MCF 10A (cell line): ENCODE measurements at regions of chr9 and their contacts with region 1.

Region 1: DNA sequence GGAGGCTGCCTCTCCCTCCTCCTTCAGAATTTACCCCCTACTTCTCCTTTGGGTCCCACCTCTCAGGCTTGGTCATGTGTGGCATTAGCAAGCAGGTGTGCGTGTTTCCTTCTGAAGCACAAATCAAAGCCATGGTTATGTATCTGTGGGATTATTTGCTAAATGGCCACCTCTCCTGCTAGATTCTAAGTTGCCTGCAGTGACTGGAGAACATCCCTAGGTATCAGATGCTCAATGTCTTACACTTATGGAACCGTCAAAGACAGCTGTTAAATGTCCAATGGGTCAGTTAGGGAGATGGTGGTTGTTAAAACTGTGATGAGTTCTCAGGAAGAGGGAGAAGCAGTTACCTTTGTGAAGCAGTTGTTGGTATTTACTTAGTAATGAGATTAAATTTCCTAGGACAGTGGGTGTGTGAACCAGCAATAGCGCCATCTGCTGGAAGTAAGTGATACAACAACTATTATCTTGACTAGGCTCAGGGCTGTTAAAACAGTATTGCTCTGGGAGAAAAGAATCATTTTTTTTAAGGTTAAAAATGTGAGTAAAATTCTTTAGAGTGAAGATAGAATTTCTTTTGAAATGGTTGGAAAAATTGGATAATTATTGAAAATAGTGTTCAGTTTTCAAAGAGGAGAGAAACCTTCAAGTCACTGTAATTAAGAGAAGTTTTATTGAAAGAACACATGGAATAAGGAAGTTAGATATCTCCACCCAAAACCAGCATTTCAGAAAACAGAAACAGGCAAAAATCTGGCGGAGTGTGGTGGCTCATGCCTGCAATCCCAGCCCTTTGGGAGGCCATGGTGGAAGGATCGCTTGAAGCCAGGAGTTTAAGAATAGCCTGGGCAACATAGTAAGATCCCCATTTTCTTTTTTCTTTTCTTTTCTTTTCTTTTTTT is 71.3 kb downstream of the TMC1 start:
- DNase-seq: peak; percentile 66
- H3K4me3 Mint-ChIP-seq: no peak overlapping the region
- H3K27ac Mint-ChIP-seq: no peak overlapping the region
- H3K4me1 Mint-ChIP-seq: peaks cover 15% of the 10 kb centered on the region
- H3K27me3 Mint-ChIP-seq: no peaks in the 10 kb centered on the region
- CTCF ChIP-seq: peak; percentile 64

Region 2: DNA sequence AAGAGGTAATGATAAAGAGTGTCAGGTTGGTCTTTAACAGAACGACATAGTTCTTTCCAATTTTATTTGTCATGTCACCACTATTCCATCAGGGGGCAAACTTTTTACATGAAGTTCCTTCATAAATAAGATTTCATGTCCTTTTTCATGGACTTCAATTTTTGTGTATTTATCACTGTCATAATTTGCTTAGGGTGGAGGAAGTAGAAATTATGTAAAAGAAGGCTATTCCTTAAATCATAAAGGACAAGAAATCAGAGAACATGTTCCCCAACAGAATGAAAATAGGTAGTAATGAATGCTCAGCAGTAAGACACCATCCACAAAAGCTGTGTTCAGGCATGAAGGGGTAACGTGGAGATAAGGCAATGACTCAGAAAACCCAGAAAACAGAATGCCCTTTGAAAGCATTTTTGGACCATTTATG is 300.5 kb before region 1 on chr9:
- CTCF ChIA-PET with region 1: interaction called, 16 read pairs
- POLR2A ChIA-PET with region 1: no interaction called
- intact Hi-C with region 1: loop called (anchors 1 kb)
- DNase-seq: peak; percentile 48
- H3K4me3 Mint-ChIP-seq: no peak overlapping the region
- H3K27ac Mint-ChIP-seq: peak overlapping the region; percentile 75
- H3K4me1 Mint-ChIP-seq: peaks cover 22% of the 10 kb centered on the region
- H3K27me3 Mint-ChIP-seq: no peaks in the 10 kb centered on the region
- CTCF ChIP-seq: peak; percentile 58

Region 3: DNA sequence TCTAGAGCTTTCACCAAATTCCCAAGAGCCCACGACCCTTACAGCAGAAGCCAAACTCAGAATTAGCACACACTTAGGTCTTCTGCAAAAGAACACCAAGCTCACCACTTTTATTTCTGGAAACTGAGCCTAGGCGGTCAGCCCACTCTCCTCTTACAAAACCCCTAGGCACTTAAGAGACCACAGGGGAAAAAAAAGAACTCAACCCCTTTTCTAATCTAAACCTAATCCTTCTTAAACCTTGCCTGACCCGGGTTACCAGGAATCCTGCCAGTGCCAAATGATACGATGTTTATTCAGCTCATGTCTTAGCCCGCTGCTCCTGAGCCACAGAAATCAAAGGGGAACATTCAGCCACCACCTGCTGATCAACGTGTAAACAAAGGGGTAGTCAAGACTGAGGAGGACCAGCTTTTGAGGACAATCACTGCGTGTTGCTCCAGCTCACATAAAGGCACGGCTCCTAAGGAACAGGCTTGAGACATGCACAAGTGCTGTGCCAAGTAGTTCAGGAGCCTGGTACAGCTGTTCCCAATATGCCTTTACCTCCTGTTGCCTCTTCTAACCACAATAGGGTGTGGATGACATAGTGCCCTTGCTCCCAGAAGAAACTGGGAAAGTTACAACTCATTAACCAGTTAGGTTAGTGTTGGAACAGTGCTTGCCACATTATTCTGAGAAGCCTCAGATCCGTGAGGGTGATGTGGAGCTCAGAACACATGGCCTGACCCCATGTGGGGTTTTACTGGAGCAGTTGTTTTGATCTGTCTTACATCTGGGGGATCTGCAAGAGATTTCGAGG is 277.0 kb before region 1 on chr9:
- CTCF ChIA-PET with region 1: interaction called, 12 read pairs
- POLR2A ChIA-PET with region 1: no interaction called
- intact Hi-C with region 1: no loop called
- DNase-seq: peak; percentile 64
- H3K4me3 Mint-ChIP-seq: no peak overlapping the region
- H3K27ac Mint-ChIP-seq: peak overlapping the region; percentile 91
- H3K4me1 Mint-ChIP-seq: peaks cover 20% of the 10 kb centered on the region
- H3K27me3 Mint-ChIP-seq: no peaks in the 10 kb centered on the region
- CTCF ChIP-seq: no peak

Region 4: DNA sequence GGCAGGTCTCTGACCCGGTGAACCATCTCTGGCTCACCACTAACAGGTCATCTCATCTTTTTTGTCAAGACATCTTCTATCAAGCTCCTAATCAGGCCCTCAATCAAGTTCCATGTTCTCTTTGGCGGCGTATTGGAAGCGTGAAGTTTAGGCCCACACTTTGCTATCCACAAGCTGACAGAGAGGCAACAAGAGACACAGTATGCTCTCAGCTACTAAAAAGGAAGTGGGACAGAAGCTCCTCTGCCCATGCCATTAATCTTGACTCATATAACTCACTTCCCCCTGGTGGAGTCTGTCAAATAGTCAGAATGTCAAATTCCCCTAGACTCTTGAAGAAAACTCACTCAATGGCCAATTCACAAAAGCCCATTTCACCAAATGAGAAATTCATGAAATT is 148.9 kb before region 1 on chr9:
- CTCF ChIA-PET with region 1: interaction called, 4 read pairs
- POLR2A ChIA-PET with region 1: interaction called, 4 read pairs
- intact Hi-C with region 1: loop called (anchors 5 kb)
- DNase-seq: no peak
- H3K4me3 Mint-ChIP-seq: no peak overlapping the region
- H3K27ac Mint-ChIP-seq: peak overlapping the region; percentile 1
- H3K4me1 Mint-ChIP-seq: peaks cover 31% of the 10 kb centered on the region
- H3K27me3 Mint-ChIP-seq: no peaks in the 10 kb centered on the region
- CTCF ChIP-seq: no peak

Region 5: GRCh38 chr9:72577212-72577753 is 15.5 kb before region 1 on chr9:
- CTCF ChIA-PET with region 1: interaction called, 11 read pairs
- POLR2A ChIA-PET with region 1: interaction called, 5 read pairs
- intact Hi-C with region 1: no loop called
- DNase-seq: peak; percentile 95
- H3K4me3 Mint-ChIP-seq: peak overlapping the region; percentile 15
- H3K27ac Mint-ChIP-seq: peak overlapping the region; percentile 53
- H3K4me1 Mint-ChIP-seq: peaks cover 36% of the 10 kb centered on the region
- H3K27me3 Mint-ChIP-seq: no peaks in the 10 kb centered on the region
- CTCF ChIP-seq: no peak

Region 6: DNA sequence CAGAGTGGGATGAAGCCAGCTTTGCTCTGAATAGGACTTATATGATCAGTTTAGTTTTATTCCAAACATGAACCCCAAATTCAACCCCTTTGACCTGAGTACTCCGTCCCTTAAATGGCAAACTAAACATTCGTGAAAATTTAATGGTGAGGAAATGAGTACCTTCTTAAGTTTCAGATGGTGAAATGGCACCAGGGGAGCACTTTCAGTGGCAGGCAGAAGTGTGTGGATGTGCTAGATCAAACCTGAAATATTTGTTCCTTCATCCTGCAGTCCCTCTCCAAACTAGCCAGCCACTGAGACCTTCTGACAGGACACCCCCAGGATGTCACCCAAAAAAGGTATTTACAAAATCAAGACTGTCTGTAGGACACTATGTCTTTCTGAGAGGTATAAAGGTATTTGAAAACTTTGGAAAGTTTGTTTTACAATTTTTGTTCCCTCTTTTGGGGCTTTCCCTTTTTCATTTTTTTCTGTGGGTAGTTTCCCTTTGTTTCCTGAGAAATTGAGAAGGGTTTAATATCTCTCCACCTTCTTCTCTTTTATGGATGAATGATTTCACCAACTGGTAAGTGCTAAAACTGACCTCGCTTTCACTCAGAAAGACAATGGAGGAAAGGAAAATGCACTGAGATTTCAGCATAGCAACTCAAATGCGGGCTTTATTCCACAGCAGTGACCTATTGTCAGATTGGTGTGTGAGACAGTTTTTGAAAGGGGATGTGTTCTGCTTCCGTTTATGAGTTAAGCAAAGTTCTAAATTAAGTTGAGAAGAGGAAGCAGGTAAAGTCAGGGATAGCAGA is 55.8 kb after region 1 on chr9:
- CTCF ChIA-PET with region 1: no interaction called
- POLR2A ChIA-PET with region 1: no interaction called
- intact Hi-C with region 1: no loop called
- DNase-seq: no peak
- H3K4me3 Mint-ChIP-seq: no peak overlapping the region
- H3K27ac Mint-ChIP-seq: no peak overlapping the region
- H3K4me1 Mint-ChIP-seq: no peaks in the 10 kb centered on the region
- H3K27me3 Mint-ChIP-seq: no peaks in the 10 kb centered on the region
- CTCF ChIP-seq: no peak

Region 7: GRCh38 chr9:72753266-72753893 is 160.6 kb after region 1 on chr9:
- CTCF ChIA-PET with region 1: interaction called, 8 read pairs
- POLR2A ChIA-PET with region 1: no interaction called
- intact Hi-C with region 1: loop called (anchors 10 kb)
- DNase-seq: peak; percentile 32
- H3K4me3 Mint-ChIP-seq: no peak overlapping the region
- H3K27ac Mint-ChIP-seq: no peak overlapping the region
- H3K4me1 Mint-ChIP-seq: no peaks in the 10 kb centered on the region
- H3K27me3 Mint-ChIP-seq: peaks cover 53% of the 10 kb centered on the region
- CTCF ChIP-seq: peak; percentile 32

Region 8: GRCh38 chr9:72827950-72828731 is 235.4 kb after region 1 on chr9:
- CTCF ChIA-PET with region 1: interaction called, 3 read pairs
- POLR2A ChIA-PET with region 1: interaction called, 3 read pairs
- intact Hi-C with region 1: loop called (anchors 2 kb)
- DNase-seq: peak; percentile 78
- H3K4me3 Mint-ChIP-seq: no peak overlapping the region
- H3K27ac Mint-ChIP-seq: peak overlapping the region; percentile 72
- H3K4me1 Mint-ChIP-seq: peaks cover 14% of the 10 kb centered on the region
- H3K27me3 Mint-ChIP-seq: peaks cover 3% of the 10 kb centered on the region
- CTCF ChIP-seq: no peak

Region 9: GRCh38 chr9:73037613-73038012 is 444.9 kb after region 1 on chr9:
- CTCF ChIA-PET with region 1: no interaction called
- POLR2A ChIA-PET with region 1: no interaction called
- intact Hi-C with region 1: no loop called
- DNase-seq: peak; percentile 12
- H3K4me3 Mint-ChIP-seq: no peak overlapping the region
- H3K27ac Mint-ChIP-seq: no peak overlapping the region
- H3K4me1 Mint-ChIP-seq: peaks cover 12% of the 10 kb centered on the region
- H3K27me3 Mint-ChIP-seq: peaks cover 74% of the 10 kb centered on the region
- CTCF ChIP-seq: no peak